T-cell (primary cell): ENCODE measurements at regions of chr2 and their contacts with region 1.

Region 1: GRCh38 chr2:157779794-157780193 is 96.3 kb downstream of the ACVR1 start:
- DNase-seq: no peak
- ATAC-seq: no peak
- H3K4me3 ChIP-seq: no peak overlapping the region
- H3K4me3 Mint-ChIP-seq: no peak overlapping the region
- H3K27ac ChIP-seq: no peak overlapping the region
- H3K27ac Mint-ChIP-seq: no peak overlapping the region
- H3K4me1 ChIP-seq: peaks cover 9 to 27% of the 10 kb centered on the region in 2 experiments
- H3K4me1 Mint-ChIP-seq: peaks cover 28 to 32% (median 29%) of the 10 kb centered on the region in 3 donors
- H3K27me3 ChIP-seq: no peaks in the 10 kb centered on the region
- H3K27me3 Mint-ChIP-seq: no peaks in the 10 kb centered on the region

Region 2: GRCh38 chr2:157789933-157790511 is 10.2 kb after region 1 on chr2:
- CTCF ChIA-PET with region 1: interaction called in 1 of 2 experiments, 10 read pairs
- POLR2A ChIA-PET with region 1: no interaction called
- DNase-seq: no peak
- ATAC-seq: no peak
- H3K4me3 ChIP-seq: no peak overlapping the region
- H3K4me3 Mint-ChIP-seq: no peak overlapping the region
- H3K27ac ChIP-seq: no peak overlapping the region
- H3K27ac Mint-ChIP-seq: peak overlapping the region in 1 of 2 donors; percentile 26
- H3K4me1 ChIP-seq: no peaks in the 10 kb centered on the region
- H3K4me1 Mint-ChIP-seq: peaks cover 13 to 22% (median 19%) of the 10 kb centered on the region in 3 donors
- H3K27me3 ChIP-seq: no peaks in the 10 kb centered on the region
- H3K27me3 Mint-ChIP-seq: no peaks in the 10 kb centered on the region